A673 (cell line): ENCODE measurements at regions of chr6 and their contacts with region 1.

Region 1: GRCh38 chr6:10722820-10723566 is at the start of gene TMEM14C:
- DNase-seq: peak; percentile 96
- H3K4me3 ChIP-seq: peak within 1 kb of the TSS; percentile 70
- H3K27ac ChIP-seq: peak within 1 kb of the TSS; percentile 85
- H3K4me1 ChIP-seq: peaks cover 15% of the 10 kb centered on the region
- H3K27me3 ChIP-seq: no peaks in the 10 kb centered on the region
- CTCF ChIP-seq: no peak
- total RNA-seq, gene TMEM14C: 68.3 and 75.1 TPM in 2 replicates

Region 2: GRCh38 chr6:10395171-10395941 is 327.6 kb before region 1 on chr6:
- CTCF ChIA-PET with region 1: no interaction called
- POLR2A ChIA-PET with region 1: no interaction called
- intact Hi-C with region 1: no loop called
- DNase-seq: no peak
- H3K4me3 ChIP-seq: no peak overlapping the region
- H3K27ac ChIP-seq: no peak overlapping the region
- H3K4me1 ChIP-seq: peaks cover 33% of the 10 kb centered on the region
- H3K27me3 ChIP-seq: no peaks in the 10 kb centered on the region
- CTCF ChIP-seq: no peak

Region 3: DNA sequence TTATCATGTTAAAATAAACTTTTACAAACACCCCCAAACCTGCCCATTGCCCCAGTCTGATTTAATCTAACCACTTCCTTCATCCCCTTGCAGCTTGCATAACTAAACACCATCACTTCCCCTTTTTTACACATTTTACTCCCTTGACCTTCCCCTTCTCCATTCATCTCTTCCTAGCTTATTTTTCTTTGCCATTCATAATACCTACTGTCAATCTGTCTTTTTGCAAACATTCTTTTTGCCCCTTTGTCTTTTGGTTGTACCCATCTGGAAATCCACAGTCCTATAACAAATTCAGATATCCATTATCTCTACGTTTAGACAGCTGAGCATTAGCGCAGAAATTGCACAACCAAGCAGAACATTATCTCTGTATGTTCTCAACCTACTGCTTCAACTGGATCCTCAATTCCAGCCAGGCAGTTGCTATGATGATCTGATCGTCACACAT is 79.8 kb before region 1 on chr6:
- CTCF ChIA-PET with region 1: no interaction called
- POLR2A ChIA-PET with region 1: no interaction called
- intact Hi-C with region 1: no loop called
- DNase-seq: no peak
- H3K4me3 ChIP-seq: no peak overlapping the region
- H3K27ac ChIP-seq: no peak overlapping the region
- H3K4me1 ChIP-seq: no peaks in the 10 kb centered on the region
- H3K27me3 ChIP-seq: no peaks in the 10 kb centered on the region
- CTCF ChIP-seq: no peak

Region 4: GRCh38 chr6:10736731-10737130 is 13.7 kb after region 1 on chr6:
- CTCF ChIA-PET with region 1: no interaction called
- POLR2A ChIA-PET with region 1: no interaction called
- intact Hi-C with region 1: no loop called
- DNase-seq: no peak
- H3K4me3 ChIP-seq: no peak overlapping the region
- H3K27ac ChIP-seq: no peak overlapping the region
- H3K4me1 ChIP-seq: no peaks in the 10 kb centered on the region
- H3K27me3 ChIP-seq: no peaks in the 10 kb centered on the region
- CTCF ChIP-seq: no peak

Region 5: GRCh38 chr6:10747251-10747972 is 24.4 kb after region 1 on chr6 and contains the start of gene TMEM14B:
- CTCF ChIA-PET with region 1: no interaction called
- POLR2A ChIA-PET with region 1: no interaction called
- intact Hi-C with region 1: loop called (anchors 2 kb)
- DNase-seq: peak; percentile 98
- H3K4me3 ChIP-seq: peak within 1 kb of the TSS; percentile 89
- H3K27ac ChIP-seq: peak within 1 kb of the TSS; percentile 91
- H3K4me1 ChIP-seq: peaks cover 8% of the 10 kb centered on the region
- H3K27me3 ChIP-seq: no peaks in the 10 kb centered on the region
- CTCF ChIP-seq: no peak
- total RNA-seq, gene TMEM14B: 90.7 and 94.6 TPM in 2 replicates

Region 6: DNA sequence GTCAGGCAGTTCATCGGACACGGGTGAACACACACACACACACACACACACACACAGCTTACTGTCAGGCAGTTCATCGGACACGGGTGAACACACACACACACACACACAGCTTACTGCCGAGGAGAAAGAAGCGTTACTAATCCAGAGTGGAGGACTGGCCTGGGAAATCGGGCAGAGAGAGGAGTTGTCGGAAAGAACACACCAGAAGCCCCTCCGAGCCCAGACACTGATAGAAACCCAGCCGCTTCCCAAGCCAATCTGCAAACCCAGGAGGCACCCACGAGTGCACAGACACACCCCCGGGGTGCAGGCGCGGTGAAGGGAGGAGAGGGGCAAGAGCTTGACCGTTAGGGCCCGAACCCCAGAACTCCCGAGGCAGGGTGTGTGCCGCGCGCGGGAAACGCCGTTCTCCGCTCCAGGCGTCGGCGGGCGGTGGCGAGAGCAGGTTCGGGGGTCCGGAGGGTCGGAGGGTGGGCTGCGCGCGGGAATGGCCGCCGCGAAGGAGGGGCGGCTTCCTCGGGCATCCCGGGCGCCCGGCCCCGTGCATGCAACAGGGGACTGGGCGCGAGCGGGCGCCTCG is 320.5 kb after region 1 on chr6:
- CTCF ChIA-PET with region 1: no interaction called
- POLR2A ChIA-PET with region 1: no interaction called
- intact Hi-C with region 1: no loop called
- DNase-seq: no peak
- H3K4me3 ChIP-seq: peak overlapping the region; percentile 82
- H3K27ac ChIP-seq: peak overlapping the region; percentile 58
- H3K4me1 ChIP-seq: peaks cover 9% of the 10 kb centered on the region
- H3K27me3 ChIP-seq: peaks cover 2% of the 10 kb centered on the region
- CTCF ChIP-seq: no peak